Activated B cell treated with CpG ODN at 0.5 μM for 24 hours (primary cell): ENCODE measurements at regions of chr6 and their contacts with region 1.

Region 1: GRCh38 chr6:85354761-85355618 is 94.9 kb upstream of the NT5E start:
- DNase-seq: peak; percentile 43
- ATAC-seq: peak; percentile 68
- H3K4me3 Mint-ChIP-seq: no peak overlapping the region
- H3K27ac Mint-ChIP-seq: no peak overlapping the region
- H3K4me1 Mint-ChIP-seq: no peaks in the 10 kb centered on the region
- H3K27me3 Mint-ChIP-seq: peaks cover 6% of the 10 kb centered on the region
- CTCF ChIP-seq: peak; percentile 92

Region 2: GRCh38 chr6:85298553-85298952 is 56.4 kb before region 1 on chr6:
- CTCF ChIA-PET with region 1: no interaction called
- POLR2A ChIA-PET with region 1: no interaction called
- intact Hi-C with region 1: no loop called
- DNase-seq: no peak
- ATAC-seq: no peak
- H3K4me3 Mint-ChIP-seq: no peak overlapping the region
- H3K27ac Mint-ChIP-seq: no peak overlapping the region
- H3K4me1 Mint-ChIP-seq: no peaks in the 10 kb centered on the region
- H3K27me3 Mint-ChIP-seq: no peaks in the 10 kb centered on the region
- CTCF ChIP-seq: no peak

Region 3: DNA sequence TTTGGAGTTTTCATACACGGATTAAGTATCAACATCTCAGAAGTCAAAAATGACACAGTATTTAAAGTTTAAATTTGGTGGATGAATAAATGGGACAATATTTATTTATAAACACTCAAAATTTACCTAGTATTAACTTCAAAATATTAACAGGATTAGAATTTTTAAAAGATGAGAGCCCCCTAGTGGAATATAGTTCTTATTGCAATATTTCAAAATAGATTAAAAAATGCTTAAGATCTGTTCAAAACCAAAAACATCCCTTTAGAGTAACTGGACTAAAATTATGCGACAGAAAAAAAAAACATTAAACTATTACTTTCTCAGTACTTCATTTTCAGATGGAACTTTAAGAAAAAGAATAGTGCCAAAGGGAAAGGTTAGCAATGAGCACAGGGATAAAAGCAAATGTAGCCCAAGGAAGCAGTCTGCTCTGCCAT is 182.1 kb after region 1 on chr6:
- CTCF ChIA-PET with region 1: interaction called, 3 read pairs
- POLR2A ChIA-PET with region 1: no interaction called
- intact Hi-C with region 1: loop called (anchors 1 kb)
- DNase-seq: no peak
- ATAC-seq: no peak
- H3K4me3 Mint-ChIP-seq: no peak overlapping the region
- H3K27ac Mint-ChIP-seq: no peak overlapping the region
- H3K4me1 Mint-ChIP-seq: no peaks in the 10 kb centered on the region
- H3K27me3 Mint-ChIP-seq: no peaks in the 10 kb centered on the region
- CTCF ChIP-seq: peak; percentile 94

Region 4: DNA sequence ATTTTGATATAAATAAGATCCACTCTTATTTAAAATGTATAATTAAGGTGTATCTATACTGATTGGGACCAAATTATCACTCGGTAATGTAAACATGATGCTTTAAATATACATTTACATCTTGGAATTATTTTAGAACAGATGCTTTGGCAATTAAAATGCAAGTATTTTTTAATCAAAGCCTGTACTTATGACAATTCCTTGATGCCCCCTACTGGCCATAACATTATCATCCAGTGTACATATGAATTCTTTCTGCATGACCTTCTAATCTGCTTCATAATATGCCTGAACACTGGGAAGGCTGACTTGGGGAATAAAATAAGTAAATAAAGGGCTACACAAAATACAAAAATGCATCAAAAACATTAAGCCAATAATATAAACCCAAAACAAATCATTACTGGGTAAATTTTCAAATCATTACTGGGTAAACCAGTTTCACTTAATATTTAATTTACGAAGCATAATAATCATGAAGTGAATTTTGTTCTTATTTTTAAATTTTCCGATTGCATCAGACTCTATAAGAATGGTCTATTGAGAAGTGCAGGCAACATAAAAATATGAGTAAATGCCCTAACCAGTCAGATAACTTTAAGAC is 1674.8 kb after region 1 on chr6:
- CTCF ChIA-PET with region 1: no interaction called
- POLR2A ChIA-PET with region 1: no interaction called
- intact Hi-C with region 1: loop called (anchors 5 kb)
- DNase-seq: no peak
- ATAC-seq: no peak
- H3K4me3 Mint-ChIP-seq: no peak overlapping the region
- H3K27ac Mint-ChIP-seq: no peak overlapping the region
- H3K4me1 Mint-ChIP-seq: no peaks in the 10 kb centered on the region
- H3K27me3 Mint-ChIP-seq: peaks cover 2% of the 10 kb centered on the region
- CTCF ChIP-seq: no peak